ENCODE measurements at regions of chr3 and their contacts with region 1.

Region 1: GRCh38 chr3:128607710-128608048 is 42.9 kb downstream of the RPN1 start:
- DNase-seq: no peak
- H3K4me3 ChIP-seq: peak overlapping the region; percentile 63
- CTCF ChIP-seq: no peak

Region 2: DNA sequence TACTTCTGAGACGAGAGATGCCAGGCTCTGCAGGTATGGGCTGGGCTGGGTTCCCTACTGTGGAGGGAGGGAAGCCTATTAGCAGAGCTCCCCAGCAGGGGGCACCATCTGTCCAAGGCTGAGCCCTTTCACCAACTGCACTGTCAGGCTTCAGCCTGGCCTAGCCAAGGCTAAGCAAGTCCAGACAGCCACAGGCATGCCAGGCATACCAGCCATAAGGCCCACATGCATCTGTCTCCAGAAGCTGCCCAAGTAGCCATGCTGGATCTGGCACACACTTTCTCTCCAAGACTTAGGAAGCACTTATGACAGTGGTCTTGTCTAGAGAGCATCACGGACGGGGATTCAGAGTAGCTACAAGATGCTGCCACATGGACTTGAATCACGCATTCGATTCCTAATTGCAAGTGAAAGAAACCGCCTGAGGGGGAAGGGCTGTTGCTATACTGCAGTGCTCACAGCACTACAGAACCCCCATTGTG is 512.4 kb before region 1 on chr3:
- CTCF ChIA-PET with region 1: interaction called, 43 read pairs
- POLR2A ChIA-PET with region 1: no interaction called
- DNase-seq: peak; percentile 82
- H3K4me3 ChIP-seq: no peak overlapping the region
- CTCF ChIP-seq: peak; percentile 90

Region 3: DNA sequence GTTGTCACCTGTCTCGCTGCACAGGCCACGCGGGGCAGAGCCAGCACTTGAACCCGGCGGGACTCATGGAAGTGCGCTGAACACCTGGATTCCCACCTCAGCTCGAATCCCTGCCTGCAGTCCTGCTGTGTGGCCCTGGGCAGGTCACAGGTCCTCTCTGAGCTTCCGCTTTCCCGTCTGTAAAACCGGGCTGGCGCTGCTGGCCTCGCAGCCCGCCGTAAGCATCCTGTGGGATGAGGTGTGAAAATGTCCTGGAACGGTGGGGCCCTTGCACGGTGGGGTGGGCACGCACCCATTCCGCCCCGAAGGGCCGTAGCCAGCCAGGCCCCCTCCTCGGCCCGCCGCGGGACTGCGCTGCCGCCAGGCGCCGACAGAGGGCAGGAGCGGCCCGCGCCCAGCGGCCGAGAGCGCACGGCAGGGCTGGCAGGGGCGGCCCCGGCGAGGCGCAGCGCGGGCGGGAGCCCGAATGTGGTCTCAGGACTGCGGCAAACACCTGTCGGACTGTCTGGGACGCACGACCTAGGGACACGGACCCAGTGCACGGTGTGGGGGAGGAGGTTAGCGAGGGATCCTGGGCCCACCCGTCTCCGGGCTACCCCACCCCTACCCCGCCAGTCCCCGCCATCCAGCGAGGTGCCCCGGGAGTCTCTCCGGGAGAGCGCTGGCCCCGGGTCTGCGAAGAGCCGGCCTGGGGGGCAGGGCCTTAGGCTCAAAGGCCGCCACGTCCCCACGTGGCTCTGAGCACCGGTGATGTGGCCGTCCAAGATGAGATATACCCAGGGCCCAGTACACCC is 181.4 kb before region 1 on chr3:
- CTCF ChIA-PET with region 1: interaction called, 93 read pairs
- POLR2A ChIA-PET with region 1: no interaction called
- DNase-seq: no peak
- H3K4me3 ChIP-seq: peak overlapping the region; percentile 36; the same call in 1 of the 2 replicates
- CTCF ChIP-seq: peak; percentile 75

Region 4: DNA sequence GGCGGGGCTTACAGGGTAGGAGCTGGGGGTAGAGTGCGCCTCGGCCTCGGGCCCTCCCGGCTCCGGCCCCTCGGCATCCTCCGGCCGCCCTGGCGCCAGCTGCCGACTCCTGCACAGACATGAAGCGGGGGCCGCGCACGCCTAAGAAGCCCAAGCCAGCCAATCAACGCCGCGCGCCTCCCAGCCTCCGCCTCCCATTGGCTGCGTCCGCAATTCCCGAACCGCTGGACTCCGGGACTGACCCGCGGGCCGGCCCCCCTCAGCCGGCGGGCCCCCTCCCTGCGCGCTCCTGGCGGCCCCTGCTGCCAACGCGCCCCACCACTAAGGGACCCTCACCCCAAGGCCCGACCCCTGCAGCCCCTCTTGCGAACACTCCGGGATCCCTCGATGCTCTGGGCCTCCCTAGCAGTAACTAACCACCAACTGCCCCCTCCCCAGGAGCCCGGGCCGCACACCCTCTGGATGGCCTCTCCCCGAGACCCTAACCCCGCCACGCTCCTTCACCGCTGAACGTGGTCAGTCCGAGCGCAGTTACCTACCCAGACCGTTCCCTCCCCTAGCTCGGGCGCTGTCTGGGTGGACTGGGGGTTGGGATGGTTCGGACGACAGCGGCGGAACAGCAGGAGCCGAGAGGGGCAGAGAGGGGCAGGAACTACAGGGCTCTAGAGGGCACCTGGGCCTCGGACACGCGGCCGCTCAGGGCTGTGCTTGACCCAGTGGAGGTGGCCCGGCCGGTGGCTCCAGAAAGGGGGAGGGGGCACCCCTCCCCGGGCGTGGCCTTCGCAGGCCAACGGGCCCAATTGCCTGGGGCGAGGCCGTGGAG is 119.7 kb before region 1 on chr3:
- CTCF ChIA-PET with region 1: interaction called, 13 read pairs
- POLR2A ChIA-PET with region 1: no interaction called
- DNase-seq: peak; percentile 55
- H3K4me3 ChIP-seq: peak overlapping the region; percentile 82
- CTCF ChIP-seq: no peak

Region 5: DNA sequence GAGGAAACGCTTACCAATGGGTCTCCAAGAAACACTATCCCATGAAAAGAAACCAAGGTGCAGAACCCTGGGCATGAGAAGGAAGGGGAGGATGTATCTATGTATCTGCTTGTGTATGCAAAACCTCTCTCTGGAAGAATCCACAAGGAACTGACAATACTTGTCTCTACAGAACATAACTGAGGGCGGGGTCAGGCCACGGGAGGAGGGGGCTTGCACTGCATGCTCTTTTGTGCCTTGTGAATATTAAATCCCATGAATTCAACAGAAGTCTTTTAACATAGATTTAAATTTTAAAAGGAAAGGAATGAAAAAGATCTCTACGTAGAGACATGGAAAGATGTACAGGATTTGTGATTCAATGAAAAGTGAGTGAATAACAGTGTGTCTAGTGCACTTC is 14.8 kb before region 1 on chr3:
- CTCF ChIA-PET with region 1: interaction called, 49 read pairs
- POLR2A ChIA-PET with region 1: no interaction called
- DNase-seq: no peak
- H3K4me3 ChIP-seq: no peak overlapping the region
- CTCF ChIP-seq: no peak